H1 (cell line): ENCODE measurements at regions of chr5 and their contacts with region 1.

Region 1: DNA sequence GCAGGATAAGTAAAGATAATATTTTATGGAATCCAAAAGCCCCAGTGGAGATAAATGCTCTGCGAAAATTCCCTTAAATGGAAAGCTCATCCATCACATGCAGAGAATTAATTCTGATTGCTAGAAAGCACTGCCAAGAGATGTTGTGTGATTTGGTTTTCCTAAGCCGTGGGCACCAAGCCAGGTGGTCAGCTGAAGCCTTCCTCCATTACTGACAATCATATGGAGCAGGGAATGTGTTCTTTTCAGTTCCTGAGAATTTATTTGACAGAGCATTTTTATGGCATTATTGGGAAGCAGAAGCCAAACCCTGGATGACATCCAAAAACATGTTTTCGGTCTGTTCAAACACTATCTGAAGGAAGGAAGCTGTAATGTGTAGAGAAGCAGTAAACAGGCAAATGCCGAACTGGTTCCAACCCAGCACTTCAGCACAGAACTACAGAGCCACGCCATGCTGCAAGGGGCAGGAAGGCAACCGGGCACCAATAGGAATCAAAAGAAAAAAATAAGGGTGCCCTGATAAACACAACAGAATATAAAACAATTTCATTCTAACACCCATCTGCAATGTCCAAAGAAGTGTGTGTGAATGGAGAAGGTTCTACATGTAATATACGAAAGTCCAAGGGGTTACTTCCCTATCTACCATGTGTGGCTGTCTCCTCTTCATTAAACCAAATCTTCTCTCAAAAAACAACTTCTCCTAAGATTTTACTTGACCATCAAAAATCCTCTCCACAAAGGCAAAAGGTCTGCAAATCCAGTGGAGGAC is 12.3 kb downstream of the ARSB start:
- DNase-seq: no peak
- H3K4me3 ChIP-seq: no peak overlapping the region
- H3K27ac ChIP-seq: no peak overlapping the region
- H3K4me1 ChIP-seq: no peaks in the 10 kb centered on the region
- H3K27me3 ChIP-seq: no peaks in the 10 kb centered on the region
- CTCF ChIP-seq: no peak
- EP300 ChIP-seq: no peak
- POLR2A ChIP-seq: no peak
- RAD21 ChIP-seq: no peak

Region 2: DNA sequence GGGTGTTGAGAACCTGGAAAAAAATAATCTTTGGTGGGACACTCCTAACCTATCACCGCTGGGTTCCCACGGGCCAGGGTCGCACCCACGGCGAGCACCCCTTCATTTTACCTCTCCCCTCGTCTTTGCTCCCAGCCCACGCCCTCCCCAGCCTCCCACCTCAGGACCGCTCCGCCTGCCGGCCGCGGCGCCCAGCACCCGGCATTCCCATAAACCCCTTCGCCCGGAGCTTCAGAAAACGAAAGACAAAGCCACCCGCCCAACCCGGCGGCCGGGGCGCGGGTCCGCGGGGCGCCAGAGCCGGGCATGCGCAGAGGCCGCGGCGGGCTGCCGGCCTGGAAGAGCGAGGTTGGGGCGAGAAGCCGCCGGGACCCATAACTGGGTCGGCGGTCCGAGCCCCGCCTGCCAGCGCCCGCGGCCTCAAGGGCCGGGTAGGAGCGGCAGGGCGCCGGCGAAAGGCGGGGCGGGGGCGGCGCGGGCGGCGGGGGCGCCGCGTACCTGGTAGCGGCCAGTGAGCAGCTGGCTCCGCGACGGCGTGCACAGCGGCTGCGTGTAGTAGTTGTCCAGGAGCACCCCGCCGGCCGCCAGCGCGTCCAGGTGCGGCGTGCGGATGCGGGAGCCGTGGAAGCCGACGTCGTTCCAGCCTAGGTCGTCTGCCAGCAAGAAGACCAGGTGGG is 11.7 kb after region 1 on chr5:
- CTCF ChIA-PET with region 1: interaction called, 4 read pairs
- POLR2A ChIA-PET with region 1: interaction called, 17 read pairs
- DNase-seq: peak; percentile 68 to 89
- H3K4me3 ChIP-seq: peak overlapping the region; percentile 51 to 87 (median 72)
- H3K27ac ChIP-seq: peak overlapping the region; percentile 89
- H3K4me1 ChIP-seq: peaks cover 4 to 14% (median 9%) of the 10 kb centered on the region in 4 experiments; a peak in 6 of 7 replicates
- H3K27me3 ChIP-seq: no peaks in the 10 kb centered on the region
- CTCF ChIP-seq: peak in 1 of 3 experiments; percentile 5; a peak in 1 of 4 replicates
- EP300 ChIP-seq: no peak
- POLR2A ChIP-seq: peak; percentile 59 to 69
- RAD21 ChIP-seq: peak in 1 of 2 experiments; percentile 21; a peak in 1 of 4 replicates

Region 3: GRCh38 chr5:79093762-79094161 is 120.9 kb after region 1 on chr5:
- CTCF ChIA-PET with region 1: no interaction called
- POLR2A ChIA-PET with region 1: no interaction called
- DNase-seq: no peak
- H3K4me3 ChIP-seq: no peak overlapping the region
- H3K27ac ChIP-seq: no peak overlapping the region
- H3K4me1 ChIP-seq: no peaks in the 10 kb centered on the region
- H3K27me3 ChIP-seq: no peaks in the 10 kb centered on the region; a peak in 1 of 7 replicates
- CTCF ChIP-seq: no peak
- EP300 ChIP-seq: no peak
- POLR2A ChIP-seq: no peak
- RAD21 ChIP-seq: no peak